Activated CD4-positive, alpha-beta memory T cell treated with anti-CD3 and anti-CD28 coated beads for 36 hours (primary cell): ENCODE measurements at regions of chr1 and their contacts with region 1.

Region 1: DNA sequence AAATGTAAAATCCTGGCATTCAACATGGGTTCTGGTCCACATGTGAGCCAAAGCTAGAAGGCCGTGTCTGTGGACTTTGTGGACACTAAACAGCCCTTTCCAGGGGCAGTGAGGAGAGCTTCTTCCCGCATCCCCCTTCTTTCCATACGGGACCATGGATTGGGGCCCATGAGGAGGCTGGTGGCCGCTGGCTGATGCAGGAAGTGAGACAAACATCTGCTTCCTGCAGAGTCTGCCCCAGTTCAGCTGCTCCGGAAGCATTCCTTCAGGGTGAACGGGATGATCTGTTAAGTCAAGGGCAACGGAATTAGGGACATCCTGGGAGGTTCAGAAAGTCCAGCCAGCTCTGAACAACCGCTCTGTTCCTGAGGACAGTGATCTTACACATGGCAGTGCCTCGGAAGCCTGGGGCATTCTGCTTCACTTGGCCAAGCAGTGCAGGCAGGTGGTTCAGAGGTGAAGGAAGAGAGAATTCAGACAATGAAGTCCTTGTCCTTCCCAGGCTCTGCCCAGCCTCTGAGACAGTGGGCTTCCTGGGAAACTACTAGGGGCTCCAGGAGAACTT is 1.5 kb downstream of the CA6 start:
- DNase-seq: peak; percentile 44
- H3K4me3 Mint-ChIP-seq: peak overlapping the region; percentile 23
- H3K27ac Mint-ChIP-seq: peak overlapping the region; percentile 96
- H3K4me1 Mint-ChIP-seq: peaks cover 54% of the 10 kb centered on the region
- H3K27me3 Mint-ChIP-seq: no peaks in the 10 kb centered on the region

Region 2: DNA sequence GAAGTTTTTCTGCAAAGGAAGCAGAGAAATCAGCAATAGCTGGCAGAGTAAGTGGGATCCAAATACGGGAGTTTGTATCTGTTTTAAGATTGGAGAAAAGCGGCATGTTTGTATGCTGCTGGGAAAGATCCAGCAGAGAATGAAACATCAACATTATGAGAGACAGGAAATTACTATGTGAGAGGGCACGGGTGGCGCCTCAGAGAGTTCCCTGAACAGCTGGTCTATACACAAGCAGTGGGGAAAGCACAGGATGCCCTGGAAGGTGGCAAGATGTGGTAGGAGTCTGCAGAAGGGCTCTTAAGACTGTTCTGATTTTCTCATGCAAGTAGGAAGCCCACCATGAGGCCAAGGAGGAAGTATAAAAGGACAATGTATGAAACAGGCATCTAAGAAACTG is 260.2 kb before region 1 on chr1:
- CTCF ChIA-PET with region 1: no interaction called
- POLR2A ChIA-PET with region 1: no interaction called
- intact Hi-C with region 1: no loop called
- DNase-seq: no peak
- H3K4me3 Mint-ChIP-seq: no peak overlapping the region
- H3K27ac Mint-ChIP-seq: no peak overlapping the region
- H3K4me1 Mint-ChIP-seq: peaks cover 24% of the 10 kb centered on the region
- H3K27me3 Mint-ChIP-seq: no peaks in the 10 kb centered on the region

Region 3: GRCh38 chr1:8712413-8713231 is 234.6 kb before region 1 on chr1:
- CTCF ChIA-PET with region 1: no interaction called
- POLR2A ChIA-PET with region 1: no interaction called
- intact Hi-C with region 1: no loop called
- DNase-seq: no peak
- H3K4me3 Mint-ChIP-seq: peak overlapping the region; percentile 3
- H3K27ac Mint-ChIP-seq: peak overlapping the region; percentile 40
- H3K4me1 Mint-ChIP-seq: peaks cover 17% of the 10 kb centered on the region
- H3K27me3 Mint-ChIP-seq: no peaks in the 10 kb centered on the region

Region 4: DNA sequence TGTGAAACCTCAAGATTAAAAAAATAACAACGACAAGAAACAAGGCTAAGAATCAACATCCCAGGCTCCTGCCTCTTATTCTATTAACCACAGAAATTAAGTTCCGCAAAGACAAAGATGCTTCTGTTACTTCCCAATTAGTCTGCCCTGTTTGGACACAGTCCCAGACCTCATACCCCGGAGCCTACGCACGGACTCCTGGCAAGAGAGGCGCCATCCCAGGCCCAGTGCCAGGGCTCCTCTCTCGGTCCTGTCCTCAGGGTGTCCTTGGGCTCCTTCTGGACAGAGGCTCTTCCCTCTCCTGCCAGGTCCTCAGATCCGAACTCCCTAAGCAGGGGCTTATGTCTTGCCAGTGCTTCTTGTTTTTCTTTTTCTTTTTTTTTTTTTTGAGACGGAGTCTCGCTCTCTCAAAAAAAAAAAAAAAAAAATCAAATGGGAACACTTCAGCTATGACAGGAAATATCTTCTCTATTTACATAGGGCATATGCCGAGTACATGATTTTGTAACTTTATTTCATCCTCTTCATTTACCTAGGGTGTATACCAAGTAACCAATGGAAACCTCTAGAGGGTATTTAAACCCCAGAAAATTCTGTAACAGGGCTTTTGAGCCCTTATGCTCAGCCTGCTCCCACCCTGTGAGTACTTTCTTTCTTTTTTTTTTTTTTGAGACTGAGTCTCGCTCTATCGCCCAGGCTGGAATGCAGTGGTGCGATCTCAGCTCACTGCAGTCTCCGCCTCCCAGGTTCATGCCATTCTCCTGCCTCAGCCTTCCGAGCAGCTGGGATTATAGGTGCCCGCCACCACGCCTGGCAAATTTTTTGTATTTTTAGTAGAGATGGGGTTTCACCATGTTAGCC is 57.1 kb before region 1 on chr1:
- CTCF ChIA-PET with region 1: no interaction called
- POLR2A ChIA-PET with region 1: no interaction called
- intact Hi-C with region 1: no loop called
- DNase-seq: no peak
- H3K4me3 Mint-ChIP-seq: no peak overlapping the region
- H3K27ac Mint-ChIP-seq: no peak overlapping the region
- H3K4me1 Mint-ChIP-seq: peaks cover 6% of the 10 kb centered on the region
- H3K27me3 Mint-ChIP-seq: no peaks in the 10 kb centered on the region

Region 5: DNA sequence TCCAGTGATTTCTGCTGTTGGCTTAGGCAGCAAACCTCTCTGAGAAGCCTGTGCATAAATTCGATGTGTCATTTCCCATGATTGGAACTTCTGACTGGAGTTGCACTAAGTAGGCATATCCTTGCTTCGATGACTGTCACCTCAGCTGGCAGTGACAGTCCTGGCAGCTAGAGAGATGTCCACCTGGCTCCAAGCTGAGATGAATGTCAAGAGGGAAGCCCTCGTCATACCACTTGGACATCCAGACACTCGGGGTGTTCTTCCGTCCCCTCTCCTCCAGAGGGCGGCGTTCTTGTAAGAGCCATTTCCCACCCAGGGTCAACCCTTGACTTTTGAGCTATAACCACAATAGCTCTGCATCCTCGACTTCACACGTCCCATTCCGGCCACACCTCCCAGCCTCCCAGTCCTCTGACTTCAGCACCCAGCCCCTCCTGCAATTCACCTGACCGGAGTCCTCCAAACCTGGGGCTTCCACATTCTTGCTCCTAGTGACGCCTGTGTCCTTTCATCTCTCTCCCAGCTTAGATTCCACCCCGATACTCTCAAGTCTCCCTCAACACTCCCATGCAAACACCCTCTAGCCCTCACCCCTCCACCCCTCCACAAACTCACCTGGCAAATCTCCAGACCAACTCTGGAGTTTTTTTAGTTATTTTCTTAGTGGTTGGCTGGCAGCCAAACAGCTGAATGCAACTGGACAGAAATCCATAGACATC is 15.8 kb after region 1 on chr1:
- CTCF ChIA-PET with region 1: interaction called, 22 read pairs
- POLR2A ChIA-PET with region 1: interaction called, 3 read pairs
- intact Hi-C with region 1: no loop called
- DNase-seq: peak; percentile 66
- H3K4me3 Mint-ChIP-seq: no peak overlapping the region
- H3K27ac Mint-ChIP-seq: peak overlapping the region; percentile 52
- H3K4me1 Mint-ChIP-seq: peaks cover 64% of the 10 kb centered on the region
- H3K27me3 Mint-ChIP-seq: no peaks in the 10 kb centered on the region

Region 6: GRCh38 chr1:8970870-8971337 is 23.7 kb after region 1 on chr1:
- CTCF ChIA-PET with region 1: interaction called, 5 read pairs
- POLR2A ChIA-PET with region 1: interaction called, 9 read pairs
- intact Hi-C with region 1: loop called (anchors 2 kb)
- DNase-seq: peak; percentile 73
- H3K4me3 Mint-ChIP-seq: peak overlapping the region; percentile 91
- H3K27ac Mint-ChIP-seq: peak overlapping the region; percentile 87
- H3K4me1 Mint-ChIP-seq: peaks cover 42% of the 10 kb centered on the region
- H3K27me3 Mint-ChIP-seq: no peaks in the 10 kb centered on the region